ENCODE measurements at regions of chr3 and their contacts with region 1.

Region 1: GRCh38 chr3:134640872-134641470 is 9.9 kb downstream of the KY start:
- DNase-seq: no peak
- H3K4me3 ChIP-seq: no peak overlapping the region
- CTCF ChIP-seq: peak; percentile 69

Region 2: GRCh38 chr3:134606033-134607025 is 34.6 kb before region 1 on chr3:
- CTCF ChIA-PET with region 1: interaction called, 74 read pairs
- POLR2A ChIA-PET with region 1: no interaction called
- DNase-seq: no peak
- H3K4me3 ChIP-seq: no peak overlapping the region
- CTCF ChIP-seq: no peak

Region 3: DNA sequence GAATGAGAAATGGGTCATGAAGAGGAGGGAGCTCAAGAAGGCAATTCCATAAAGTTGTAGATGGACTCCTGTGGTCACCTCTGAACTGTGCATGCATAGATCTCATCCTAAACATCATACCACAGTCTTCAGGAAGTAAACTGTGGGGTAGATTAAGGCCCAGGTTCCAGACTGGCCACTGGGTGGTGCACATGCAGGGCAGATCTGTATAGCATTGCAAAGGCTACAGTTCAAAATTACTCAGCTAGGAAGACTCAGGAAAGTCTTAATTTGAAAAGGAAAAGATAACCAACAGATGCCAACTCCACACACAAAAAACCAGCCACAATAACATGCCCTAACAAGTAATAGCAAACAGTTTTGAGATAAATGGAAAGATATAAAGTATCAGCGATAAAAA is 10.5 kb before region 1 on chr3:
- CTCF ChIA-PET with region 1: interaction called, 11 read pairs
- POLR2A ChIA-PET with region 1: no interaction called
- DNase-seq: no peak
- H3K4me3 ChIP-seq: no peak overlapping the region
- CTCF ChIP-seq: peak; percentile 56

Measured in AG04449 (cell line).